ENCODE measurements at regions of chr9 and their contacts with region 1.

Region 1: GRCh38 chr9:88980740-88981203 is 10.5 kb upstream of the S1PR3 start:
- DNase-seq: no peak
- H3K4me3 ChIP-seq: no peak overlapping the region
- H3K27ac ChIP-seq: peak overlapping the region in 2 of 4 donors; percentile 2 to 14
- H3K4me1 ChIP-seq: peaks cover 11 to 27% (median 11%) of the 10 kb centered on the region in 3 donors
- H3K27me3 ChIP-seq: no peaks in the 10 kb centered on the region
- CTCF ChIP-seq: no peak
- POLR2A ChIP-seq: no peak

Region 2: GRCh38 chr9:88593537-88594185 is 387.1 kb before region 1 on chr9:
- intact Hi-C with region 1: loop called (anchors 5 kb)
- DNase-seq: no peak
- H3K4me3 ChIP-seq: no peak overlapping the region
- H3K27ac ChIP-seq: no peak overlapping the region
- H3K4me1 ChIP-seq: no peaks in the 10 kb centered on the region
- H3K27me3 ChIP-seq: peaks cover 0 to 15% (median 0%) of the 10 kb centered on the region in 4 donors
- CTCF ChIP-seq: peak; percentile 24 to 78 (median 63)
- POLR2A ChIP-seq: no peak

Region 3: DNA sequence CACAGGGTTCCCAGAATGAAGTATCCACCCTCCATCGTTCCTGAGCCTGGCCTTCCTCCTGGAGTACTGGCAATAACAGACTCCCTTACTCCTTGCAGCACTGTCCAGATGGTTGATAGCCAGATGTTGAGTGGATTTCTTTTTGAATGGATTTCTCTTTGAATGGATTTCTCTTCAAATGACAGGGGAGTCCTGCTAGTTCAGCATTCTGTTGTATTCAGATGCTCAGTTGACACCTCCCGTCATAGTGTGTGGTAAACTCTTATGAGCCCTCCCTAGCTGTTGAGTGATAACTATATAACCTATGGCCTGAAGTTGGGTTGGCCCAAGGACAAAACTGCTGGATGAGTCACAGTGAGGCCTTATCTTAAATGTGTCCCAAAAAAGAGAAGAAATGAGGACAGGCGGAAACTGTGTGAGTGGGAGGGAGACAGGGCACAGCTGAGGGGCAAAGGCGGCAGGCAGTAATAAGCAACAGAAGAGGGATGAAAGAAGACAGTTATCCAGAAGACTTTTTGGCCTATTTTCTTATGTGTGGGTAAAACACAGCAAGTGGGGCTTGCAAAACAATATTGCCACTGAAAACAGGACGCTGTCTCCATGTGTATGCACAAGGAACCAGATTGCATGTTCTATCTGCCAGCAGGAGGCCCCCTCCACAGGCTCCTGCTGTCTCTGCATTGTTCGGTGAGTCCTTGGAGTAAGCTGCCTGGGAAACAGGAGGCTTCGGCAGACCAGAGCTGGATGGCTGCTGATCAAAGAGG is 199.0 kb before region 1 on chr9:
- intact Hi-C with region 1: no loop called
- DNase-seq: no peak
- H3K4me3 ChIP-seq: no peak overlapping the region
- H3K27ac ChIP-seq: peak overlapping the region in 2 of 4 donors; percentile 15 to 16
- H3K4me1 ChIP-seq: peaks cover 0 to 10% (median 1%) of the 10 kb centered on the region in 3 donors
- H3K27me3 ChIP-seq: peaks cover 0 to 6% (median 0%) of the 10 kb centered on the region in 4 donors
- CTCF ChIP-seq: peak in 1 of 6 experiments; percentile 9
- POLR2A ChIP-seq: no peak

Region 4: GRCh38 chr9:89204801-89205200 is 224.0 kb after region 1 on chr9:
- intact Hi-C with region 1: no loop called
- DNase-seq: no peak
- H3K4me3 ChIP-seq: no peak overlapping the region
- H3K27ac ChIP-seq: no peak overlapping the region
- H3K4me1 ChIP-seq: no peaks in the 10 kb centered on the region
- H3K27me3 ChIP-seq: no peaks in the 10 kb centered on the region
- CTCF ChIP-seq: no peak
- POLR2A ChIP-seq: no peak

Measured in esophagus squamous epithelium (tissue), 5 donors.